Posterior vena cava (tissue), 2 donors: ENCODE measurements at regions of chr18 and their contacts with region 1.

Region 1: GRCh38 chr18:30591462-30591861 is 451.1 kb downstream of the DSC3 start:
- DNase-seq: no peak

Region 2: DNA sequence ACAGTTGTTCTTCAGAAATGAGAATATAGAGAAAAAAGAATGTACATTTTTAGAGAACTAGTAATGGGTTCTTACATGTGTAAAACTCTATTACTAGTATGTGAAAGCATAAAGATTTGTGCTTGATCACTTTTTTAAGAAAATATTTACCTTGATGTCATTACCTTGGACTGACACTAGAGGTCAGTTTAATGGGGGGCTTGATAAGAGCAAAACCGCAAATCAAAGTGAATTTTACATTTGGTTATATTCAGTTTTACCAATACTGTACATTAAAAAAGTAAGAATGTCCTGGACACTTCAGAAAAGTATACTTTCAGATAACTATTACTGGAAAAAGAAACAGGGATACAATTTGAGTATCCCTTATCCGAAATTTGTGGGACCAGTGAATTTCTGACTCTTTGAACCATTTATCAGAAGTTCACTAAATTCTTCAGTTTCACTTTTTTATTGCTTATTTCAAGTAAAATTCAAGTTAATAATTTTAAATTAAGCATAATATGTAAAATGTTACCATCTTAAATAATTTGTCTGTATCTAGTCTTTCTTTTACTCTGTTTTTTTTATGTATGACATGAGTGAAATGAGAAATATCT is 698.4 kb before region 1 on chr18:
- intact Hi-C with region 1: loop called in 1 of 2 experiments (anchors 5 kb)
- DNase-seq: no peak

Region 3: GRCh38 chr18:31064130-31064529 is 472.7 kb after region 1 on chr18:
- intact Hi-C with region 1: no loop called
- DNase-seq: no peak